Transverse colon (tissue), 4 donors: ENCODE measurements at regions of chr1 and their contacts with region 1.

Region 1: GRCh38 chr1:212558693-212559480 is 49.7 kb upstream of the ATF3 start:
- DNase-seq: peak; percentile 96
- H3K4me3 ChIP-seq: peak overlapping the region; percentile 63 to 92 (median 82)
- H3K27ac ChIP-seq: peak overlapping the region; percentile 93 to 99 (median 96)
- H3K4me1 ChIP-seq: peaks cover 0 to 15% (median 11%) of the 10 kb centered on the region in 4 donors
- H3K27me3 ChIP-seq: no peaks in the 10 kb centered on the region
- CTCF ChIP-seq: no peak
- EP300 ChIP-seq: peak; percentile 97
- POLR2A ChIP-seq: peak; percentile 88

Region 2: DNA sequence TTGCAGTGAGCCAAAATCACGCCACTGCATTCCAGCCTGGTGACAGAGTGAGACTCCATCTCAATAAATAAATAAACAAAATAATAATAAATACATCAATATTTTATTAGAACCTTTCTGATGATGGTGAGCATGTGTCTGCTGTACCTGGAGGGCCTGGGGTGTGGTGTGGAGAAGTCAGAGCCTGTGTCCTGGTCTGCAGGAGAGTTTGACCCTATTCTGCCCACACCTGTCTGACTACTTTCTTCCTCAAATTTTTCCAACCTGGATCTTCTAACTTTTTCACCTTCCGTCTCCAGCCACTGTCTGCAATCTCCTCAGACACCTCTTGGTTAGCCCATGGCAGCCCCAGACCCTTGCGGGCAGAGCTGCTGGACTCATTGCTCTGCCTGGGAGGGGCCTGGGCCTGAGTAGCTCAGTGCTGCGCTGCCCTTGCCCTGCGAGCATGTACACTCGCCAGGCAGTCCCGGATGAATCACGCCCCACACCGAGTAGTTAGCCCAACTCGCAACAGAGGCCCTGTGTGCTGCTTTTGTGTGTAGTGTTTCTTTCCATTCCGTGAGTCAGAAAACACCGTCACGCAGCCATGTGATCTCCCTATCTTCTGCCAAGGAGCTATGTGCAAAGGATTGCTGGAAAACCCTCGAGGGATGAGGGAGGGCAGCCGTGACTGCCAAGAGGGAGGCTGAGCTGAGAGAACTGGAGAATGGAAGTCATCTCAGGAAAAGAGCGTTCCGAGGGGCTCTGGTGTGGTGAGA is 89.0 kb before region 1 on chr1:
- in situ Hi-C with region 1: no loop called
- intact Hi-C with region 1: loop called (anchors 5 kb)
- DNase-seq: peak; percentile 64
- H3K4me3 ChIP-seq: no peak overlapping the region
- H3K27ac ChIP-seq: peak overlapping the region; percentile 57 to 79 (median 59)
- H3K4me1 ChIP-seq: peaks cover 0 to 7% (median 0%) of the 10 kb centered on the region in 4 donors
- H3K27me3 ChIP-seq: no peaks in the 10 kb centered on the region
- CTCF ChIP-seq: no peak
- EP300 ChIP-seq: no peak
- POLR2A ChIP-seq: no peak

Region 3: DNA sequence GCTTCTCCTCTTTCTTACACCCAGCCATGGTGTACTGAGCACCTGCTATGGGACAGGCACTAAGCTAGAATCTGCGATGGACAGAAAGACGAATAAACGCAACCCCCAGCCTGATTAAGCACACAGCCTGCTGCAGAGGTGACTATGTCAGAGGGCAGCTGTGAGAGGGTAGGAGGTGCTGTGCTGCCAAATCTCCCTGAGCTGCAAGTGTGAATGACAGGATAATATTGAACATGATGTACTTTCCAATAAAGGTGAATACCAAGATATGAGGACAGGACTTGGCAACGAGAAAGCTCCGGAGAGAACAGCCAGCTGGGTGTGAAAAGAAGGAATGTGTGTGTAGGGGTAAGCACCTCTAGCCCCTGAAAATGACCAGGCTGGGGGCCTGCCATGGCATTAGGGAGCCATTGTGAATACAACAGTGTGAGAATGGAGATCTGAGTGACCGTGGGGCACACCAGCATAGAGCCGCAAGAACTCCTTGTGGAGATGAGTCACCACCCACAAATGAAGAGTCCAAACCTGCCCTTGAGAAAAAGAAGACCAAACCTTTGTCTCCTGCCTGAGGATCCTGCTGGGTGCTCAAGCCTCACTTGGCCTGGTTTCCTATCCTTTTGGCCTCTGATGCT is 33.3 kb before region 1 on chr1:
- in situ Hi-C with region 1: no loop called
- intact Hi-C with region 1: no loop called
- DNase-seq: no peak
- H3K4me3 ChIP-seq: no peak overlapping the region
- H3K27ac ChIP-seq: no peak overlapping the region
- H3K4me1 ChIP-seq: peaks cover 0 to 5% (median 2%) of the 10 kb centered on the region in 4 donors
- H3K27me3 ChIP-seq: no peaks in the 10 kb centered on the region
- CTCF ChIP-seq: no peak
- EP300 ChIP-seq: no peak
- POLR2A ChIP-seq: no peak

Region 4: GRCh38 chr1:212608209-212608955 is 49.5 kb after region 1 on chr1 and contains the start of gene ATF3:
- in situ Hi-C with region 1: no loop called
- intact Hi-C with region 1: loop called (anchors 2 kb)
- DNase-seq: peak; percentile 99
- H3K4me3 ChIP-seq: peak within 1 kb of the TSS; percentile 61 to 87 (median 79)
- H3K27ac ChIP-seq: peak within 1 kb of the TSS; percentile 96 to 99 (median 98)
- H3K4me1 ChIP-seq: peaks cover 0 to 37% (median 34%) of the 10 kb centered on the region in 4 donors
- H3K27me3 ChIP-seq: peaks cover 42% of the 10 kb centered on the region
- CTCF ChIP-seq: no peak
- EP300 ChIP-seq: peak; percentile 48
- POLR2A ChIP-seq: peak; percentile 100
- total RNA-seq, gene ATF3: 7.8 to 84.8 (median 46.1) TPM